Naive thymus-derived CD4-positive, alpha-beta T cell (primary cell): ENCODE measurements at regions of chr7 and their contacts with region 1.

Region 1: GRCh38 chr7:77696198-77697028 is at the start of gene RSBN1L:
- DNase-seq: peak; percentile 96 to 98 (median 98)
- ATAC-seq: peak; percentile 98
- H3K4me3 ChIP-seq: peak within 1 kb of the TSS; percentile 99
- H3K4me3 Mint-ChIP-seq: peak within 1 kb of the TSS; percentile 89 to 100 (median 99)
- H3K27ac ChIP-seq: peak within 1 kb of the TSS; percentile 94
- H3K27ac Mint-ChIP-seq: peak within 1 kb of the TSS; percentile 94 to 98 (median 96)
- H3K4me1 ChIP-seq: peaks cover 13 to 15% of the 10 kb centered on the region in 2 donors
- H3K4me1 Mint-ChIP-seq: peaks cover 22 to 81% (median 65%) of the 10 kb centered on the region in 7 donors
- H3K27me3 ChIP-seq: no peaks in the 10 kb centered on the region
- H3K27me3 Mint-ChIP-seq: no peaks in the 10 kb centered on the region
- total RNA-seq, gene RSBN1L: 19.7 to 41.7 (median 30.8) TPM

Region 2: DNA sequence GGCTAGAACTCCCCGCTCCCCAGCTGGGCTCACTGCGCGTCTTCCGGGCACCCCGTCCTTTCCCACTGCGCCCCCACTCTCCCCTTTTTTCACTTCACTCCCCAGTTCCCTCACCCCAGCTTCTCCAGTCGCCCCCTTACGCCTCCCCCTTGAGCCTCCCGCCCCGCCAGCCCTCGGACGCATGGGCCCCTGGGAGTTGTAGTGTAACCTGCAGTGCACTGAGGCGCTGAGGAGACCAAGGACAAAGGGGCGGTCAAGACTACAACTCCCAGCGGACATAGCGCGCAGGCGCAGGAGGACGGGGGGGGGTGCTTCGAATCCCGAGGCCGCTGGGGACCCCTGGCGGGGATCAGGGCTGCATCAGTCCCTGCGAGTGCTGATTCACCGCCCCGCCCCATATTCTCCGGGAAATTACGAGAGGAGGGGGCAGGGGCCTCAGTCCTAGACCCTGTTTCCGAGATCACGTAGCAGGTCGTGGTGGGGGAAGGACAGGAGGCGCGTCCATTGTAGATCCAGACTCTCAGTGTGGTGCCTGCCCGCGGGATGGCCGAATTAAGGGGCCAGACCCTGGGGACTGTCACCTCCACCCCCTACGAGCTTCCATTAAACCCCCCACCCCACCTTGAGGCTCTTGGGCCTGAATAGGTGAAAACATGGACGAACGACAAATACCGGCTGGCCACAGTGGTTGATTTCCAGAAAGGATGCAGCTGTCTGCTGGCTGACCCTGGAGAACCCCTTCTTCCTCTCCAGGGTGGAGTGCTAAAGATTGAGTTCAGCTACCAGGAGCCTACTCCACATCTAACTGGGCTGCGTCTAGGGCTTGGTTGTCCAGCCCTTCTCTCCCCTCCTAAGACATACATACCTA is 1337.1 kb before region 1 on chr7:
- CTCF ChIA-PET with region 1: no interaction called
- POLR2A ChIA-PET with region 1: no interaction called
- intact Hi-C with region 1: loop called in 1 of 2 experiments (anchors 5 kb)
- DNase-seq: peak; percentile 87 to 96 (median 95)
- ATAC-seq: peak; percentile 94
- H3K4me3 ChIP-seq: peak overlapping the region; percentile 72
- H3K4me3 Mint-ChIP-seq: peak overlapping the region; percentile 84 to 99 (median 95)
- H3K27ac ChIP-seq: peak overlapping the region; percentile 92
- H3K27ac Mint-ChIP-seq: peak overlapping the region; percentile 66 to 99 (median 93)
- H3K4me1 ChIP-seq: peaks cover 4 to 31% of the 10 kb centered on the region in 2 donors
- H3K4me1 Mint-ChIP-seq: peaks cover 28 to 46% (median 43%) of the 10 kb centered on the region in 7 donors
- H3K27me3 ChIP-seq: no peaks in the 10 kb centered on the region
- H3K27me3 Mint-ChIP-seq: no peaks in the 10 kb centered on the region

Region 3: GRCh38 chr7:77415823-77416622 is 280.4 kb before region 1 on chr7 and contains the start of gene GSAP:
- CTCF ChIA-PET with region 1: no interaction called
- POLR2A ChIA-PET with region 1: no interaction called
- intact Hi-C with region 1: loop called in 1 of 2 experiments (anchors 1 kb)
- DNase-seq: peak; percentile 36 to 59 (median 47)
- ATAC-seq: peak; percentile 83
- H3K4me3 ChIP-seq: peak within 1 kb of the TSS; percentile 75
- H3K4me3 Mint-ChIP-seq: peak within 1 kb of the TSS; percentile 67 to 87 (median 83)
- H3K27ac ChIP-seq: peak within 1 kb of the TSS; percentile 71
- H3K27ac Mint-ChIP-seq: peak within 1 kb of the TSS; percentile 56 to 89 (median 86)
- H3K4me1 ChIP-seq: peaks cover 7 to 8% of the 10 kb centered on the region in 2 donors
- H3K4me1 Mint-ChIP-seq: peaks cover 25 to 56% (median 49%) of the 10 kb centered on the region in 7 donors
- H3K27me3 ChIP-seq: no peaks in the 10 kb centered on the region
- H3K27me3 Mint-ChIP-seq: peaks cover 0 to 25% (median 0%) of the 10 kb centered on the region in 5 donors
- total RNA-seq, gene GSAP: 14.9 to 59.8 (median 29.2) TPM

Region 4: DNA sequence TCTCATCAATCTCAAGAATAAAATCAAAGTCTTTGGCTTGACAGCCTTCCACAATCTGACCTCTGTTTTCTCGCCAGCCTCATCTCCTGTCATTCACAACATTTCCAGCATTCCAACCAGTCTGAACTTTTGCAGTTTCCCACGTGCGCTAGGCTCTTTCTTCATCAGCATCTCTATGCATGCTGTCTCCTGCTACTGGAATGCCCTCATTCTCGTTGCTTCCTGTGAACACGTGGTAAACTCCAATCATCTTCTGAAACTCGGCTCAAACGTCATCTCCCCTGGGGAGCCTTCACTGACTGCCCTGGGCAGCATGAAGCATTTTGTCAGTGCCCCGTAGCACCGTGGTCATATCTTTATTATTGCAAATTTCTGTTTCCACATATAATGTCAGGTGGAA is 12.4 kb before region 1 on chr7:
- CTCF ChIA-PET with region 1: interaction called, 8 read pairs
- POLR2A ChIA-PET with region 1: interaction called, 29 read pairs
- intact Hi-C with region 1: loop called (anchors 1 to 2 kb)
- DNase-seq: no peak
- ATAC-seq: no peak
- H3K4me3 ChIP-seq: no peak overlapping the region
- H3K4me3 Mint-ChIP-seq: no peak overlapping the region
- H3K27ac ChIP-seq: no peak overlapping the region
- H3K27ac Mint-ChIP-seq: no peak overlapping the region
- H3K4me1 ChIP-seq: peaks cover 15 to 16% of the 10 kb centered on the region in 2 donors
- H3K4me1 Mint-ChIP-seq: peaks cover 20 to 30% (median 26%) of the 10 kb centered on the region in 7 donors
- H3K27me3 ChIP-seq: no peaks in the 10 kb centered on the region
- H3K27me3 Mint-ChIP-seq: no peaks in the 10 kb centered on the region

Region 5: GRCh38 chr7:77759294-77759889 is 63.0 kb after region 1 on chr7:
- CTCF ChIA-PET with region 1: interaction called, 6 read pairs
- POLR2A ChIA-PET with region 1: interaction called, 6 read pairs
- intact Hi-C with region 1: loop called (anchors 1 kb)
- DNase-seq: peak in 8 of 9 donors; percentile 55 to 80 (median 70)
- ATAC-seq: peak; percentile 93
- H3K4me3 ChIP-seq: no peak overlapping the region
- H3K4me3 Mint-ChIP-seq: peak overlapping the region in 1 of 10 donors; percentile 29
- H3K27ac ChIP-seq: no peak overlapping the region
- H3K27ac Mint-ChIP-seq: peak overlapping the region in 7 of 9 donors; percentile 3 to 72 (median 32)
- H3K4me1 ChIP-seq: peaks cover 0 to 9% of the 10 kb centered on the region in 2 donors
- H3K4me1 Mint-ChIP-seq: peaks cover 17 to 64% (median 53%) of the 10 kb centered on the region in 7 donors
- H3K27me3 ChIP-seq: no peaks in the 10 kb centered on the region
- H3K27me3 Mint-ChIP-seq: no peaks in the 10 kb centered on the region